ENCODE measurements at regions of chr16 and their contacts with region 1.

Region 1: DNA sequence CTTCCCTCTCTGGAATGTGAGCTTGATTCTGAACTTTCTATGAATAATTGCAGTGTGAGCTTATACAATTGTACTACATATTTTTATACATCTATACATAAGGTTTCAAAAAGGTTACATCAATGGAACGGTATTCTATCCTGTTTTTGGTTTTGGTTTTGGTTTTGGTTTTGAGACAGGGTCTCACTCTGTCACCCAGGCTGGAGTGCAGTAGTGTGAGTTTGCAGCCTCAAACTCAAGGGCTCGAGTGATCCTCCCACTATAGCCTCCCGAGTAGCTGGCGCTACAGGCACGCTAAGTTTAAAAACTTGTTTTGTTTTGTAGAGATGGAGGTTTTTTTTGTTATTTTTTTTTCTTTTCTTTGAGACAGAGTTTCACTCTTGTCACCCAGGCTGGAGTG is 1.1 kb downstream of the CTRB1 start:
- DNase-seq: no peak
- H3K4me3 Mint-ChIP-seq: peak overlapping the region; percentile 68
- H3K27ac Mint-ChIP-seq: peak overlapping the region; percentile 79
- H3K4me1 Mint-ChIP-seq: peaks cover 9% of the 10 kb centered on the region
- H3K27me3 Mint-ChIP-seq: peaks cover 1% of the 10 kb centered on the region

Region 2: DNA sequence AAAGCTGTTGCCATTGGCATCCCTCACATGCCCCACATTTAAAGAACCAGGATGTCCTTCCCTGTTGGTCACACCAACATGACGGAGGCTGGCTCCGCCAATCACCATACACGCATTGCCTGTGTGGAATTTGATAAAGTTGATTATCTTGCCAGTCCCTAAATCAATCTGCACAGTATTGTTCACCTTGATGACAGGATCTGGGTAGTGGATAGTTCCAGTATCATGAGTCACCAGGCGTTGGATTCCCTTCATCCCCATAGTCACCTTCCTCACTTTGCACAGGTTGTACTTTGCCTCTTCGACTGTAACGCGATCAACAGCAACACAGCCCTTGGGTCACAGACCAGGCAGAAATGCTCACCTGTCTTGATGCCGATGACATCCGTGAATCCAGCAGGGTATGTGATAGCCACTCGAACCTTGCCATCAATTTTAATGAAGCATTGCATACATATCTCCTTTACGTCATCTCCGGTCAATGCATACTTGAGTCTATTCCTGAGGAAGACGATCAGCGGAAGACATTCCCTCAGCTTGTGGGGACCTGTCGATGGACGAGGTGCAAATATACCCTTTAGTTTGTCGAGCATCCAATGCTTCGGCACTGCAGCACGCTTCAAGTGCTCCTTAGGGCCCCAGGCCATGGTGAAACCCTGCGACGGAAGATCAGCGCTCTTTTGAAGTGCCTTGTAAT is 27.1 kb before region 1 on chr16:
- intact Hi-C with region 1: no loop called
- DNase-seq: no peak
- H3K4me3 Mint-ChIP-seq: no peak overlapping the region
- H3K27ac Mint-ChIP-seq: no peak overlapping the region
- H3K4me1 Mint-ChIP-seq: no peaks in the 10 kb centered on the region
- H3K27me3 Mint-ChIP-seq: peaks cover 18% of the 10 kb centered on the region

Region 3: DNA sequence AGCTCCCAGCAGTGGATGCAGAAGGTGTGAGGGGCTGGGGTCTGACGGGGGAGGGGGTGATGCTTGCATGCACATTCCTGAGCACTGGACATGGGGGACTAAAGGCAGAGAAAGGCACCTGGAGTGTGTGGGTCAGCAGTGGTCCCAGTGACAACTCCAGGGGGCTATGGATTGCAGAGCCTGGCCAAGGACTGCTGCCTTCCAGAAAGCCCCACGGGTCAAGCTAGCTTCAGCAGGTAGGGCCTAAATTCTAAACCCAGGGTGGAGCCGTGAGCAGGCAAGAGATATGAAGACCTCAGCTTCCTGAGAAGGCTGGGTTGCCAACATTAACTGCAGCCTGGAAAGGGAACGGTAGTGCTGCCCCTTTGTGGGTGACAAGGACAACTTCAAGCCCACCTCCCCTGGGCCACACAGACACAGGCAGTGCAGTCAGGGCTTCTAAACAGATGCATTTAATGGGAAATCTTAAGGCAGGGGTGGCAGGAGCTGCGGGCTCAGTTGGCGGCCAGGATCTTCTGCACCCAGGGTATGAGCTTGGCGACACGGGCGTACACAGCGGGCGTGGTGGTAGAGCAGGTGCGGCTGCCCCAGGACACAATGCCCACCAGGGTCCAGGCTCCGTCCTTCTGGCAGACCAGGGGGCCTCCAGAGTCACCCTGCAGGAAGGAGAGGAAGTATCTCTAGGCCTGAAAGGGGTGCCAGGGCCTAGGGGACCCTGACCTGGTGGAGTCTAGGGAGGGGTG is 16.0 kb before region 1 on chr16:
- intact Hi-C with region 1: loop called (anchors 2 kb)
- DNase-seq: no peak
- H3K4me3 Mint-ChIP-seq: no peak overlapping the region
- H3K27ac Mint-ChIP-seq: no peak overlapping the region
- H3K4me1 Mint-ChIP-seq: peaks cover 11% of the 10 kb centered on the region
- H3K27me3 Mint-ChIP-seq: peaks cover 9% of the 10 kb centered on the region